HepG2 (cell line): ENCODE measurements at regions of chr2 and their contacts with region 1.

Region 1: GRCh38 chr2:97806738-97807618 is 93.6 kb downstream of the ZAP70 start:
- DNase-seq: peak; percentile 54
- ATAC-seq: peak; percentile 99
- H3K4me3 ChIP-seq: no peak overlapping the region
- H3K27ac ChIP-seq: no peak overlapping the region
- H3K4me1 ChIP-seq: no peaks in the 10 kb centered on the region
- H3K27me3 ChIP-seq: no peaks in the 10 kb centered on the region
- CTCF ChIP-seq: peak; percentile 95
- EP300 ChIP-seq: no peak
- POLR2A ChIP-seq: no peak
- RAD21 ChIP-seq: peak; percentile 93

Region 2: GRCh38 chr2:97870396-97870843 is 63.4 kb after region 1 on chr2:
- CTCF ChIA-PET with region 1: no interaction called
- POLR2A ChIA-PET with region 1: no interaction called
- in situ Hi-C with region 1: no loop called
- intact Hi-C with region 1: no loop called
- DNase-seq: peak; percentile 65
- ATAC-seq: peak; percentile 87
- H3K4me3 ChIP-seq: no peak overlapping the region
- H3K27ac ChIP-seq: peak overlapping the region; percentile 50
- H3K4me1 ChIP-seq: peaks cover 63% of the 10 kb centered on the region
- H3K27me3 ChIP-seq: no peaks in the 10 kb centered on the region
- CTCF ChIP-seq: peak; percentile 32
- EP300 ChIP-seq: peak in 1 of 2 experiments; percentile 66; a peak in 2 of 4 replicates
- POLR2A ChIP-seq: no peak
- RAD21 ChIP-seq: no peak

Region 3: DNA sequence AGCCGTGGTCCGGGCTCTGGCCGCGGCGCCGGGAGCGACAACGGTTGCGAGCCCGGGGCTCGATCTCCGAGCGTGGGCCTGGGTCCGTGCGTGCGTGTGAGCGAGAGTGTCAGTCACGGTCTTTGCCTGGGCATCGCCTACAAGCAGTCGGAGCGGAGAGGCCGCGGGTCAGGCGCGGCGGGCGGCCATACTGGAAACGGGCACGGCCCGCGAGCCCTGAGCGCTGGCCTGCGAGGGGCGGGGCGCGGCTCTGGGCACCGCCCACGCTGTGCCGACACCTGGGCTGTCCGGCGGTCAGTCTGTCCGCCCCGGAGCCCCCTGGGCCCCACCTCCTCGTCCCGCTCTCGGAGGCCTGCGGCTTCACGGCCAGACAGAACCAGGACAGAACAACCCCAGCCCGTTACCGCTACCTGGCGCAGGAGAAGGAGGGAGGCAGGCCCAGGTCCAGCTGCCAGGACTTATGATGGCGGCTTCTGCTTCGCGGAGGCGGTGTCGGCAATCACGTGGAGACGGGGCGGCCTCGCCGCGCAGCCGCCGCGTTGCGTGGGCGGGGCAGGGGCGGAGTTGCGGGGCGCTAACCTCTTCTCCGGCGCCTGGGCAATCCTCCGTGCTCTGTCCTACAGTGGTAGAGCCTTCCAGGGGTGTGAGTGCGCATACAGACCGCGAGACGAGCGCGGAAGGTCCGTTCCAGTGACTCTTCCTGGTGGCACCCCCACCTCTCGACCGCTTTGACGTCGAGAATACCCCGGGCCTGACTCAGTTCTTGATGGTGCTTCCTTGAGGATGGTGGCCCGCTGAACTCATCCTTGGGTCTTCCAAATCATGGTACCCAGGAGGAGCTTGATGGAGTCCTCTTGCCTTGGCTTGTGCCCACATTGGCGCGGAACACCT is 189.0 kb after region 1 on chr2 and contains the start of gene TMEM131:
- CTCF ChIA-PET with region 1: no interaction called
- POLR2A ChIA-PET with region 1: no interaction called
- in situ Hi-C with region 1: no loop called
- intact Hi-C with region 1: loop called (anchors 2 kb)
- DNase-seq: peak; percentile 88
- ATAC-seq: peak; percentile 93
- H3K4me3 ChIP-seq: peak within 1 kb of the TSS; percentile 86 to 100 (median 98)
- H3K27ac ChIP-seq: peak within 1 kb of the TSS; percentile 96
- H3K4me1 ChIP-seq: peaks cover 70% of the 10 kb centered on the region
- H3K27me3 ChIP-seq: no peaks in the 10 kb centered on the region; a peak in 1 of 5 replicates
- CTCF ChIP-seq: no peak; the same call in 1 of the 2 replicates
- EP300 ChIP-seq: peak in 1 of 2 experiments; percentile 3; a peak in 1 of 4 replicates
- POLR2A ChIP-seq: peak; percentile 81 to 90
- RAD21 ChIP-seq: 0 out of 2 replicates have a peak, but pooled peaks have one; percentile 17
- total RNA-seq, gene TMEM131: 17.4 and 19.5 TPM in 2 replicates

Region 4: DNA sequence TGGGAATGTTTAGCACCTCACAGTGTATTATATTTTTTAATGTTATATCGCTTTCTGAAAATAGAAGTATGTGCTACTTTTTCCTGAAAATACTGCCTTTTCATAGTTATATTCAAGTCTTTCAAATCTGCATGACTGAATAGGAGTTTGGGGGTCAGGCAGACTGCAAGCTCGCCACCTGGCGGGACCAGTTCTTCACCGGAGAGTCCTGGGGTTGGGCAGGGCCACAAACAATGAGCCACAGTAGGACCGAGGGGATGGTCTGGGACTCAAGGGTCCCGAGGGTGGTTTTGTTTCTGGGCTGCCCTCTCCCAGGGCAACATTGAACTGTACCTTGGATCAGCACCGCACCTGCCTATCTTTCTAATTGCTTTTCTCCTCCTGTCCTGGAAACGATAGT is 350.6 kb after region 1 on chr2:
- CTCF ChIA-PET with region 1: interaction called, 5 read pairs
- POLR2A ChIA-PET with region 1: no interaction called
- in situ Hi-C with region 1: loop called (anchors 10 kb)
- intact Hi-C with region 1: loop called (anchors 1 kb)
- DNase-seq: no peak
- ATAC-seq: peak; percentile 80
- H3K4me3 ChIP-seq: no peak overlapping the region
- H3K27ac ChIP-seq: no peak overlapping the region
- H3K4me1 ChIP-seq: no peaks in the 10 kb centered on the region
- H3K27me3 ChIP-seq: peaks cover 2 to 26% of the 10 kb centered on the region in 2 experiments; a peak in 4 of 5 replicates
- CTCF ChIP-seq: peak; percentile 58
- EP300 ChIP-seq: no peak
- POLR2A ChIP-seq: no peak
- RAD21 ChIP-seq: no peak; the same call in 1 of the 2 replicates

Region 5: DNA sequence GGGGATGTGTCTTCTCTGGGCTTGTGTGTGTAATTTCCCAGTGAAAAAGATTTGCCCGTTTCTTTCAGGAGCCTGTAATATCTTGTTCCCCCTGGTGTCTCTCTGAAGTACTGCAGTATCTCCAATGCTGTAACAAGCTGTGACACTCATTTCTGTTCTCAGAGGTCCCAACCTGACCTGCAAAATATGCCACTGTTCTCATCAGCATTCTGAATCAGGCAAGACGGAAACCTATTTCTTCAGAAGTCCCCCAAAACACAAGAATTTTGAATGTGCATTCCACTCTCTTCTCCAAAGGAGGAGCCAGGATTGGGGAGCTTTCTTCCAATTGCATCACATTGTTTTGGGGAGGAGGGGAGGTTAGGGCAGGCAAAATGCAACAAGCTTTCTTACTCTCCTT is 462.3 kb after region 1 on chr2:
- CTCF ChIA-PET with region 1: interaction called, 31 read pairs
- POLR2A ChIA-PET with region 1: interaction called, 3 read pairs
- in situ Hi-C with region 1: loop called (anchors 10 kb)
- intact Hi-C with region 1: no loop called
- DNase-seq: peak; percentile 44
- ATAC-seq: peak; percentile 80
- H3K4me3 ChIP-seq: no peak overlapping the region
- H3K27ac ChIP-seq: no peak overlapping the region
- H3K4me1 ChIP-seq: no peaks in the 10 kb centered on the region
- H3K27me3 ChIP-seq: peaks cover 0 to 13% of the 10 kb centered on the region in 2 experiments; a peak in 3 of 5 replicates
- CTCF ChIP-seq: peak; percentile 76
- EP300 ChIP-seq: no peak
- POLR2A ChIP-seq: no peak
- RAD21 ChIP-seq: peak; percentile 69

Region 6: DNA sequence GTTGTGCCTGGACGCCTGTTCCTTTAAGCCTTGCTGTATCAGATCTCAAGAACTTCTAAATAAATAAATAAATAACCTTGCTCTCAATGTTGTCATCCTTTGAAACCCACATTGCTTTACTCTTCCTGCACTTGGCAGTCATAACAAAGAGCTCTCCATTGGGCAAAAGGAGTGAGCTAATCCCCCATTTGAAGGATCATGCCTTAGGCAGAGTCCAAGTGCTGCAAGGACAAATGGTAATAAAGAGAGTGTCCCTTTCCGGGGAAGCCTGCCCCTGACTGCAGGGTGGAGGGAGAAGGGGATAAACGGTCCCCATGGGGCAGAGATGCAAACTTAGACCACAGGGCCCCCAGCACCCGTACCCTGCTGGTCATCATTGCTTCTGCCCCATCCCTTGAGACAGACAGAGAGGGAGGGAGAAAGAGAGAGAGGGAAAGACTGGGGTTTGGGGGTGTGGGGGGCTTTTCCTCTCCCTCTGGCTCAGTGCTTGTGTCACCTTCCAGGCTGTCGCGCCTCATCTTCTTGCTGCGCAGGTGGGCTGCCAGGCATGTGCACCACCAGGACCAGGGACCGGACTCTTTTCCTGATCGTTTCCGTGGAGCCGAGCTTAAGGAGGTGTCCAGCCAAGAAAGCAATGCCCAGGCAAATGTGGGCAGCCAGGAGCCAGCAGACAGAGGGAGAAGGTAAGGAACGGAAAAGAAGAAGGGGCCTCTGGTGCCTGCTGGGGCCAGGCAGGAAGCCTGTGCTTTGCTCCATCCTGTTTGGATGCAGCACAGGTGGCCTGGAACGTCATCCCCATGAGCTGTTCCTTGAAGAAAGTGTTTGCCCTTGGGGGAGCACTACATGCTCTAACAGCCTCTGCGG is 572.9 kb after region 1 on chr2:
- CTCF ChIA-PET with region 1: interaction called, 14 read pairs
- POLR2A ChIA-PET with region 1: no interaction called
- in situ Hi-C with region 1: loop called (anchors 5 kb)
- intact Hi-C with region 1: loop called (anchors 1 kb)
- DNase-seq: no peak
- ATAC-seq: no peak
- H3K4me3 ChIP-seq: no peak overlapping the region
- H3K27ac ChIP-seq: no peak overlapping the region
- H3K4me1 ChIP-seq: no peaks in the 10 kb centered on the region
- H3K27me3 ChIP-seq: peaks cover 7 to 90% of the 10 kb centered on the region in 2 experiments; a peak in 4 of 5 replicates
- CTCF ChIP-seq: no peak
- EP300 ChIP-seq: no peak
- POLR2A ChIP-seq: no peak
- RAD21 ChIP-seq: no peak

Region 7: GRCh38 chr2:98385050-98385699 is 578.2 kb after region 1 on chr2:
- CTCF ChIA-PET with region 1: interaction called, 14 read pairs
- POLR2A ChIA-PET with region 1: no interaction called
- in situ Hi-C with region 1: loop called (anchors 5 kb)
- intact Hi-C with region 1: loop called (anchors 1 kb)
- DNase-seq: peak; percentile 79
- ATAC-seq: peak; percentile 95
- H3K4me3 ChIP-seq: no peak overlapping the region
- H3K27ac ChIP-seq: no peak overlapping the region
- H3K4me1 ChIP-seq: no peaks in the 10 kb centered on the region
- H3K27me3 ChIP-seq: peaks cover under 1 to 68% of the 10 kb centered on the region in 2 experiments; a peak in 4 of 5 replicates
- CTCF ChIP-seq: peak; percentile 98
- EP300 ChIP-seq: no peak
- POLR2A ChIP-seq: no peak
- RAD21 ChIP-seq: peak; percentile 95

Region 8: DNA sequence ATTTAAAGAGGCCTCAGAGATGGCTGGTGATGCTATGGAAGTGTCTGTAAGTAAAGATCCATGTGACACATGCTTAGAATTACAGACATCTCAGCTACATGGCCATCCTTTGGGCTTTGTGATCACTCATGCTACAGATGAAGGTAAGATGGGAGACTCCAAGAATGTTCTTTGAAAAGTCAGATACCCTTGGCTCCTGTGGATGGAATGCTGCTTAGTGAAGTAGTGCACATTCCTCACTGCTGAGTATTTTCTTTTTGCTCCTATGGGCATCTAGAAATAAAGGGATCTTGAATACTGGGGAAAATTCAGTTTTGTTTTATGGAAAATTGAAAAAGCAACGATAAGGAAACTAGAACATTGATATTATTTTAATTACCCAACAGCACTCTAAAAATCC is 1738.1 kb after region 1 on chr2:
- CTCF ChIA-PET with region 1: no interaction called
- POLR2A ChIA-PET with region 1: no interaction called
- in situ Hi-C with region 1: no loop called
- intact Hi-C with region 1: no loop called
- DNase-seq: no peak
- ATAC-seq: no peak
- H3K4me3 ChIP-seq: no peak overlapping the region
- H3K27ac ChIP-seq: no peak overlapping the region
- H3K4me1 ChIP-seq: no peaks in the 10 kb centered on the region
- H3K27me3 ChIP-seq: peaks cover 1 to 5% of the 10 kb centered on the region in 2 experiments; a peak in 1 of 5 replicates
- CTCF ChIP-seq: no peak
- EP300 ChIP-seq: no peak
- POLR2A ChIP-seq: no peak
- RAD21 ChIP-seq: no peak